H1 (cell line): ENCODE measurements at regions of chr7 and their contacts with region 1.

Region 1: DNA sequence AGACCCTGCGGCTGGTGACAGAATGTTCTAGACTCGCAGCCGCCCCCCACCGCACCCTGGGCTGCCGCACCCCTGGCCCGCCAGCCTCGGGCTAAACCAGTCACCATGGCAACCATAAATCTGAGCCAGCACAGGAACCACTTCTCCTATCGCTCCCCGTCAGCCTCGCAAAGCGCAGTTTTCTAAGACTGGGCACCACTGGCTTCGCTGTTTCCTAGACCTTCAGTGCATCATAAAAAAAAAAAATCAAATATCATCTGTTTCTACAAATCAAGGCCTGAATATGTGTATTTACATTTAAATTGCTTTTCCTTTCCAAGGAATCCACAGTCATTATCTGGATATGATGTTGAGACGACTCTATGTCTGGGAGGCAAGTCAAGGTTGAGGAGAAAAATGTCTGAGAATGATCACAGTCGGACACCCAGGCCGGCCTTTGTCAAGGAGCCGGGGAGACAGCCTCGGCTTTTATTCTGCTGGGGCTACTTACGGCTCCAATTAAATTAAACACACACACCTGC is 99.9 kb downstream of the PTPRN2 start:
- DNase-seq: no peak
- H3K4me3 ChIP-seq: no peak overlapping the region
- H3K27ac ChIP-seq: no peak overlapping the region
- H3K4me1 ChIP-seq: no peaks in the 10 kb centered on the region; a peak in 2 of 7 replicates
- H3K27me3 ChIP-seq: no peaks in the 10 kb centered on the region
- CTCF ChIP-seq: no peak
- EP300 ChIP-seq: no peak
- POLR2A ChIP-seq: no peak
- RAD21 ChIP-seq: no peak

Region 2: DNA sequence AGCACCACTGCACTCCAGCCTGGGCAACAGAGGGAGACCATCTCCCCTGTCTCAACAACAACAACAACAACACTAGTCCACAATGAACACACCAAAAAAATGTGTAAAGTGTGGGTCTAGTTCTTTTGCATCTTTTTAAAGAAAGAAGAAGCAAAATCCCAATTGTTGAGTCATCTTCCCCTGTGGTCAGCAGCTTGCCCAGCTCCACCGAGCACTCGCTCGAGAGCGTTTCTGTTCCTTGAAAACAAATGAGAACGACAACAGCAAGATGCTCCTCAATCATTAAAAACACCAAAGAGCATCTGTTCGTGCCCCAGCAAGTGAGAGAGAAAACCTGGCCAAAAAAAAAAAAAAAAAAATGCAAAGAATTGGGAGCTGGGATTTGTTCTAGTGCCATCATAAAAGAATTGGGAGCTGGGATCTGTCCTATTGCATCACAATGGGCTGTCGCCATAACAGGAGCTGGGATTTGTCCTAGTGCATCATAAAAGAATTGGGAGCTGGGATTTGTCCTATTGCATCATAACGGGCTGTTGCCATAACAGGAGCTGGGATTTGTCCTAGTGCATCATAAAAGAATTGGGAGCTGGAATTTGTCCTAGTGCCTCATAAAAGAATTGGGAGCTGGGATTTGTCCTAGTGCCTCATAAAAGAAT is 18.2 kb before region 1 on chr7:
- CTCF ChIA-PET with region 1: interaction called, 12 read pairs
- POLR2A ChIA-PET with region 1: interaction called, 4 read pairs
- DNase-seq: no peak
- H3K4me3 ChIP-seq: peak overlapping the region in 1 of 4 experiments; percentile 5; a peak in 1 of 8 replicates
- H3K27ac ChIP-seq: peak overlapping the region; percentile 60
- H3K4me1 ChIP-seq: peaks cover 14 to 29% (median 19%) of the 10 kb centered on the region in 4 experiments
- H3K27me3 ChIP-seq: no peaks in the 10 kb centered on the region; a peak in 1 of 7 replicates
- CTCF ChIP-seq: no peak
- EP300 ChIP-seq: no peak
- POLR2A ChIP-seq: no peak
- RAD21 ChIP-seq: no peak

Region 3: GRCh38 chr7:158863611-158864506 is 376.2 kb after region 1 on chr7:
- CTCF ChIA-PET with region 1: no interaction called
- POLR2A ChIA-PET with region 1: no interaction called
- DNase-seq: no peak
- H3K4me3 ChIP-seq: peak overlapping the region; percentile 40 to 66 (median 44)
- H3K27ac ChIP-seq: no peak overlapping the region; the same call in 1 of the 2 replicates
- H3K4me1 ChIP-seq: peaks cover 9 to 21% (median 15%) of the 10 kb centered on the region in 4 experiments; a peak in 6 of 7 replicates
- H3K27me3 ChIP-seq: no peaks in the 10 kb centered on the region; a peak in 1 of 7 replicates
- CTCF ChIP-seq: no peak
- EP300 ChIP-seq: no peak
- POLR2A ChIP-seq: no peak
- RAD21 ChIP-seq: no peak